HEK293 (cell line): ENCODE measurements at regions of chr20 and their contacts with region 1.

Region 1: GRCh38 chr20:2451939-2452732 is 18.5 kb downstream of the SNRPB start:
- H3K4me3 ChIP-seq: no peak overlapping the region
- H3K27ac ChIP-seq: no peak overlapping the region
- H3K4me1 ChIP-seq: no peaks in the 10 kb centered on the region
- CTCF ChIP-seq: peak; percentile 66

Region 2: GRCh38 chr20:1764136-1765033 is 687.8 kb before region 1 on chr20:
- CTCF ChIA-PET with region 1: interaction called, 12 read pairs
- POLR2A ChIA-PET with region 1: no interaction called
- H3K4me3 ChIP-seq: no peak overlapping the region
- H3K27ac ChIP-seq: no peak overlapping the region
- H3K4me1 ChIP-seq: 0 out of 2 replicates have a peak, but pooled peaks cover 3% of the 10 kb centered on the region
- CTCF ChIP-seq: 0 out of 2 replicates have a peak, but pooled peaks have one; percentile 57

Region 3: GRCh38 chr20:2206957-2207769 is 245.0 kb before region 1 on chr20:
- CTCF ChIA-PET with region 1: interaction called, 68 read pairs
- POLR2A ChIA-PET with region 1: interaction called, 7 read pairs
- H3K4me3 ChIP-seq: peak overlapping the region; percentile 52
- H3K27ac ChIP-seq: peak overlapping the region; percentile 60; the same call in 1 of the 2 replicates
- H3K4me1 ChIP-seq: 0 out of 2 replicates have a peak, but pooled peaks cover 2% of the 10 kb centered on the region
- CTCF ChIP-seq: peak; percentile 92

Region 4: GRCh38 chr20:2357114-2357513 is 95.0 kb before region 1 on chr20:
- CTCF ChIA-PET with region 1: interaction called, 11 read pairs
- POLR2A ChIA-PET with region 1: no interaction called
- H3K4me3 ChIP-seq: no peak overlapping the region
- H3K27ac ChIP-seq: no peak overlapping the region
- H3K4me1 ChIP-seq: no peaks in the 10 kb centered on the region
- CTCF ChIP-seq: no peak

Region 5: DNA sequence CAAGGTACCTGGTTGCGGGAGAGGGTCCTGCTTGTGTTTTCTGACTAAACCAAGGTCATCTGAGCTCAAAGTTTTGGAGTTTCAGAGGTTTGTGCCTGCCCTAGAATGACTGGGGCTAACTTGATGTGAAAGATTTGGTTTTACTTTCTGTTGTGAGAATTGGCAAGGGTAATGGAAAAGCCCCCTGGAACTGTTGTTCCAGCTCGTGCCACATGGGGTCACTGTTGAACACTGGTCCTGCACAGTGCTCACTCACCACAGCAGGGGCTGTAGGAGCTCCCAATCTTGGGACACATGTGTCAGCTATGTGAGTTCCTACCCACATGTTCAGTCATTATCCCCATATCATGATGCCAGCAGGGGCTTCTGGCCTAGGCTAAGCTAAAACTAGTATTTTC is 65.0 kb before region 1 on chr20:
- CTCF ChIA-PET with region 1: interaction called, 41 read pairs
- POLR2A ChIA-PET with region 1: no interaction called
- H3K4me3 ChIP-seq: no peak overlapping the region
- H3K27ac ChIP-seq: no peak overlapping the region
- H3K4me1 ChIP-seq: no peaks in the 10 kb centered on the region
- CTCF ChIP-seq: no peak

Region 6: GRCh38 chr20:2429061-2429460 is 23.1 kb before region 1 on chr20:
- CTCF ChIA-PET with region 1: interaction called, 43 read pairs
- POLR2A ChIA-PET with region 1: no interaction called
- H3K4me3 ChIP-seq: no peak overlapping the region
- H3K27ac ChIP-seq: no peak overlapping the region
- H3K4me1 ChIP-seq: no peaks in the 10 kb centered on the region
- CTCF ChIP-seq: no peak

Region 7: GRCh38 chr20:2470423-2471193 is 18.5 kb after region 1 on chr20 and contains the start of gene SNRPB:
- CTCF ChIA-PET with region 1: interaction called, 6 read pairs
- POLR2A ChIA-PET with region 1: interaction called, 51 read pairs
- H3K4me3 ChIP-seq: peak within 1 kb of the TSS; percentile 74
- H3K27ac ChIP-seq: peak within 1 kb of the TSS; percentile 100
- H3K4me1 ChIP-seq: no peaks in the 10 kb centered on the region; the same call in 1 of the 2 replicates
- CTCF ChIP-seq: peak; percentile 14; the same call in 1 of the 2 replicates